ENCODE measurements at regions of chr6 and their contacts with region 1.

Region 1: DNA sequence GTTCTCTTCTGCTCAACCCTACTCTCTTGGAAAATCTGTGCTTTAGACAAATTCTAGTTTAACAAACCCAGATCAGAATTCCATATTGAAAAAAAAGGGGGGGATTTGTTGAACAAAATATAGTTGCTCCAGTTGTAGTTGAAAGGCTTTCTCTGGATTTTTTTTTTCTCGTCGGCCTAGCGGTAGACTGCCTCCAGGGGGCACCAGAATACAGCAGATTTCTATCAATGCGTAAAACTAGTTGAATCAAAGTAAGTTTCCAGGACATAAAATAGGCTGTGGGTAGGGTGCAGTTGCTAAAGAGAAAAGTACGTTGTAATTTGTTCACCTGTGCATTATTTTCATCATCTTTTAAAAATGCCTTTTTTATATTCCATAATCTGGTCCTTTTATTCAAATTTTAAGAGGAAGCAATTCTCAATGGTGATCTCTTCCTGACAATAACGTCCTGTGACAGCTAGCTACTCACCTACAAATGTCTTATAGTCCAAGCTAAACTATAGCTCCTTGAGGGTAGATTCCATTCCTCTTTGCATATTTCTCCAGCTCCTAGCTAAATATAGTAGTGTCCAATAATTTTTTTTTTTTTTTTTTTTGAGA is 105.4 kb downstream of the PERP start:
- DNase-seq: no peak
- ATAC-seq: peak; percentile 62
- H3K4me3 ChIP-seq: no peak overlapping the region
- H3K27ac ChIP-seq: no peak overlapping the region
- H3K4me1 ChIP-seq: no peaks in the 10 kb centered on the region
- H3K27me3 ChIP-seq: no peaks in the 10 kb centered on the region
- CTCF ChIP-seq: peak; percentile 73 to 91 (median 85)
- EP300 ChIP-seq: no peak
- POLR2A ChIP-seq: no peak
- RAD21 ChIP-seq: peak; percentile 89

Region 2: GRCh38 chr6:137661601-137662000 is 340.2 kb before region 1 on chr6:
- CTCF ChIA-PET with region 1: interaction called, 43 read pairs
- POLR2A ChIA-PET with region 1: no interaction called
- RAD21 ChIA-PET with region 1: interaction called, 3 read pairs
- SMC1A ChIA-PET with region 1: interaction called, 5 read pairs
- in situ Hi-C with region 1: no loop called
- intact Hi-C with region 1: no loop called
- DNase-seq: no peak
- ATAC-seq: peak; percentile 69
- H3K4me3 ChIP-seq: no peak overlapping the region
- H3K27ac ChIP-seq: no peak overlapping the region
- H3K4me1 ChIP-seq: peaks cover 5% of the 10 kb centered on the region; the same call in 1 of the 2 replicates
- H3K27me3 ChIP-seq: no peaks in the 10 kb centered on the region
- CTCF ChIP-seq: peak; percentile 51 to 75 (median 68)
- EP300 ChIP-seq: no peak
- POLR2A ChIP-seq: no peak
- RAD21 ChIP-seq: peak; percentile 66

Region 3: GRCh38 chr6:137799950-137800568 is 201.8 kb before region 1 on chr6:
- CTCF ChIA-PET with region 1: interaction called, 4 read pairs
- POLR2A ChIA-PET with region 1: no interaction called
- RAD21 ChIA-PET with region 1: no interaction called
- SMC1A ChIA-PET with region 1: interaction called, 3 read pairs
- in situ Hi-C with region 1: no loop called
- intact Hi-C with region 1: loop called (anchors 1 kb)
- DNase-seq: no peak
- ATAC-seq: peak; percentile 96
- H3K4me3 ChIP-seq: no peak overlapping the region
- H3K27ac ChIP-seq: no peak overlapping the region
- H3K4me1 ChIP-seq: peaks cover 19% of the 10 kb centered on the region
- H3K27me3 ChIP-seq: no peaks in the 10 kb centered on the region
- CTCF ChIP-seq: peak; percentile 67 to 78 (median 70)
- EP300 ChIP-seq: no peak
- POLR2A ChIP-seq: no peak
- RAD21 ChIP-seq: peak; percentile 88

Region 4: GRCh38 chr6:137951064-137951597 is 50.7 kb before region 1 on chr6:
- CTCF ChIA-PET with region 1: interaction called, 296 read pairs
- POLR2A ChIA-PET with region 1: interaction called, 7 read pairs
- RAD21 ChIA-PET with region 1: interaction called, 151 read pairs
- SMC1A ChIA-PET with region 1: interaction called, 199 read pairs
- in situ Hi-C with region 1: no loop called
- intact Hi-C with region 1: loop called (anchors 1 kb)
- DNase-seq: no peak
- ATAC-seq: peak; percentile 82
- H3K4me3 ChIP-seq: no peak overlapping the region
- H3K27ac ChIP-seq: no peak overlapping the region
- H3K4me1 ChIP-seq: peaks cover 27% of the 10 kb centered on the region
- H3K27me3 ChIP-seq: no peaks in the 10 kb centered on the region
- CTCF ChIP-seq: peak in 2 of 3 experiments; percentile 59 to 62; a peak in 4 of 6 replicates
- EP300 ChIP-seq: peak in 1 of 2 experiments; percentile 19; a peak in 1 of 4 replicates
- POLR2A ChIP-seq: no peak
- RAD21 ChIP-seq: peak; percentile 89

Region 5: GRCh38 chr6:137989664-137990063 is 12.2 kb before region 1 on chr6:
- CTCF ChIA-PET with region 1: interaction called, 31 read pairs
- POLR2A ChIA-PET with region 1: no interaction called
- RAD21 ChIA-PET with region 1: interaction called, 7 read pairs
- SMC1A ChIA-PET with region 1: interaction called, 14 read pairs
- in situ Hi-C with region 1: no loop called
- intact Hi-C with region 1: no loop called
- DNase-seq: no peak
- ATAC-seq: no peak
- H3K4me3 ChIP-seq: no peak overlapping the region
- H3K27ac ChIP-seq: no peak overlapping the region
- H3K4me1 ChIP-seq: no peaks in the 10 kb centered on the region
- H3K27me3 ChIP-seq: no peaks in the 10 kb centered on the region
- CTCF ChIP-seq: no peak
- EP300 ChIP-seq: no peak
- POLR2A ChIP-seq: no peak
- RAD21 ChIP-seq: no peak

Region 6: GRCh38 chr6:138109042-138109997 is 107.5 kb after region 1 on chr6:
- CTCF ChIA-PET with region 1: interaction called, 52 read pairs
- POLR2A ChIA-PET with region 1: interaction called, 4 read pairs
- RAD21 ChIA-PET with region 1: interaction called, 37 read pairs
- SMC1A ChIA-PET with region 1: interaction called, 62 read pairs
- in situ Hi-C with region 1: loop called (anchors 5 kb)
- intact Hi-C with region 1: loop called (anchors 1 kb)
- DNase-seq: peak; percentile 21
- ATAC-seq: peak; percentile 52
- H3K4me3 ChIP-seq: no peak overlapping the region
- H3K27ac ChIP-seq: no peak overlapping the region
- H3K4me1 ChIP-seq: 0 out of 2 replicates have a peak, but pooled peaks cover 5% of the 10 kb centered on the region
- H3K27me3 ChIP-seq: peaks cover 2 to 31% of the 10 kb centered on the region in 2 experiments
- CTCF ChIP-seq: peak; percentile 84 to 94 (median 91)
- EP300 ChIP-seq: no peak
- POLR2A ChIP-seq: no peak
- RAD21 ChIP-seq: peak; percentile 88

Measured in GM12878 (cell line).